ENCODE measurements at regions of chr7 and their contacts with region 1.

Region 1: GRCh38 chr7:34133983-34134782 is 228.8 kb downstream of the BMPER start:
- DNase-seq: peak; percentile 85
- H3K4me3 Mint-ChIP-seq: no peak overlapping the region
- H3K27ac Mint-ChIP-seq: no peak overlapping the region
- H3K4me1 Mint-ChIP-seq: no peaks in the 10 kb centered on the region
- H3K27me3 Mint-ChIP-seq: peaks cover 75% of the 10 kb centered on the region
- CTCF ChIP-seq: peak; percentile 88

Region 2: GRCh38 chr7:34036051-34036945 is 97.9 kb before region 1 on chr7:
- CTCF ChIA-PET with region 1: no interaction called
- intact Hi-C with region 1: no loop called
- DNase-seq: peak; percentile 81
- H3K4me3 Mint-ChIP-seq: peak overlapping the region; percentile 45
- H3K27ac Mint-ChIP-seq: peak overlapping the region; percentile 60
- H3K4me1 Mint-ChIP-seq: peaks cover 23% of the 10 kb centered on the region
- H3K27me3 Mint-ChIP-seq: peaks cover 8% of the 10 kb centered on the region
- CTCF ChIP-seq: no peak

Region 3: DNA sequence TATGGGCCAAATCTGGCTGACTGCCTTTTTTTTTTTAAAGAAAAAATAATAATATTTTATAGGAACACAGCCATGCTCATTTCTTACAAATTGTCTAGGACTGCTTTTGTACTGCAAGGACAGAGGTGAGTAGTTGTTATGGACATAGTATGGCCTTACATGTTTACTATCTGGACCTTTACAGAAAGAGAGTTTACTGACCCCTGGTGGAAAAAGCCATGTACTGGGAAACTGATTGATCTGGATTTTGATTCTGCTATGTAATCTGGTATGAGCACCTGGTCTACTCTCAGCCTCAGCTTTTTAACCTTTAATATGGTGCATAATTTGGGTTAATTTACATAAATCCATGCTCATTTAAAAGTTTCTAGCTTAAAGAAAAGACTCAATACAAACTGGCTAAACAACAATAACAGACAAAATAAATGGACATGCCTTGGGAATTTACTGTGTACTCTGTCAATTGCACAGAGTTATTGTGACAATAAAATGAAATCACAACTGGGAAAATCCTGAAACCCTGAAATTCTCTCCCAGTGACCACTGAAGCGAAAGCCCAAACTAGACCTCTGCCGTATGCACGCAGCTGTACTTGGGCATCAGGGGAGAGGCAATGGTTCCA is 31.9 kb after region 1 on chr7:
- CTCF ChIA-PET with region 1: no interaction called
- intact Hi-C with region 1: loop called (anchors 2 kb)
- DNase-seq: peak; percentile 22
- H3K4me3 Mint-ChIP-seq: no peak overlapping the region
- H3K27ac Mint-ChIP-seq: no peak overlapping the region
- H3K4me1 Mint-ChIP-seq: no peaks in the 10 kb centered on the region
- H3K27me3 Mint-ChIP-seq: peaks cover 36% of the 10 kb centered on the region
- CTCF ChIP-seq: peak; percentile 50

Region 4: GRCh38 chr7:34222733-34223132 is 88.5 kb after region 1 on chr7:
- CTCF ChIA-PET with region 1: no interaction called
- intact Hi-C with region 1: no loop called
- DNase-seq: no peak
- H3K4me3 Mint-ChIP-seq: no peak overlapping the region
- H3K27ac Mint-ChIP-seq: no peak overlapping the region
- H3K4me1 Mint-ChIP-seq: no peaks in the 10 kb centered on the region
- H3K27me3 Mint-ChIP-seq: peaks cover 51% of the 10 kb centered on the region
- CTCF ChIP-seq: no peak

Region 5: GRCh38 chr7:34596892-34597291 is 462.7 kb after region 1 on chr7:
- CTCF ChIA-PET with region 1: interaction called, 7 read pairs
- intact Hi-C with region 1: loop called (anchors 1 kb)
- DNase-seq: peak; percentile 40
- H3K4me3 Mint-ChIP-seq: no peak overlapping the region
- H3K27ac Mint-ChIP-seq: no peak overlapping the region
- H3K4me1 Mint-ChIP-seq: no peaks in the 10 kb centered on the region
- H3K27me3 Mint-ChIP-seq: no peaks in the 10 kb centered on the region
- CTCF ChIP-seq: peak; percentile 65